SK-N-SH (cell line): ENCODE measurements at regions of chr19 and their contacts with region 1.

Region 1: DNA sequence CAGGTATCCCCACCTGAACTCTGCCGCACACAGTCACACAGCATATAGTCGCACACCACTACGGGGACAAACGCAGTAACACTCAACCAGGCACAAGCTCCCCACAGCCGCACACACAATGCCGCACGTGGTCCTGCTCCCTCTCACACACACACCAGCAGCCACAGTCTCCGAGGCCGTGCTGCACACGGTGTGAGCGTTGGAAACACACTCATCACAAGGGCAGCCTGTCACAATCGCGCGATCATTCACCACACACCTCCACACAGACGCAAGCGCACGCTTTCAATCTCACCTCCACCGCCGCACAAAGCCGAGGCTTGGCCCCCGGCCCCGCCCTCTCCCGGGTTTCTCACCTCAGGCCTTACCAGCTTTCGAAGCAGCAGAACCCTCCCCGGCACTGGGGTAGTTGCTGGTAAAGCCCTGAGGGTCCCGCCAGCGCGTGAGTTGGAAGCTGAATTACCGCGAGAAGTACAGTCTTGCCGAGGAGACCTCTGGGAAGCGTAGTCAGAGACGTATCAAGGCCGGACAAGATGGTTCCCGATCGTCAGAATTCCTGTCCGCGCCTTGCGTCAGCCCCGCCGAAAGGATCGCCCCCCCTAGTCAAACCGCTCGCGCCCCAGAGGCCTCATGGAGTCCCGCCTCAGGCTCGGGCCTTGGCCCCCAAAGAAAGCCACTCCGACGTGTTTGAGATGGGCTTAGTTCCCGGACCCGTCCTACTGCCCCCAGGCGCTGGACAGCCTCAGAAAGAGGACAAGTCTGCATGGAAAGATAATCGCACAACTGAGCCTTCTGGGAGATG is at the start of gene ZNF566:
- DNase-seq: peak; percentile 94
- H3K4me3 ChIP-seq: peak within 1 kb of the TSS; percentile 62 to 83
- H3K27ac ChIP-seq: peak within 1 kb of the TSS; percentile 83 to 96
- H3K4me1 ChIP-seq: no peaks in the 10 kb centered on the region; a peak in 2 of 4 replicates
- H3K27me3 ChIP-seq: no peaks in the 10 kb centered on the region
- CTCF ChIP-seq: peak; percentile 32
- EP300 ChIP-seq: no peak
- RAD21 ChIP-seq: no peak
- polyA plus RNA-seq, gene ZNF566: 1.7 and 3.4 TPM in 2 replicates

Region 2: GRCh38 chr19:36418287-36419001 is 70.9 kb before region 1 on chr19 and contains the start of gene ZFP82:
- CTCF ChIA-PET with region 1: interaction called, 6 read pairs
- POLR2A ChIA-PET with region 1: interaction called, 10 read pairs
- DNase-seq: peak; percentile 98
- H3K4me3 ChIP-seq: peak within 1 kb of the TSS; percentile 66 to 72
- H3K27ac ChIP-seq: peak within 1 kb of the TSS; percentile 64 to 88
- H3K4me1 ChIP-seq: peaks cover 0 to 6% of the 10 kb centered on the region in 2 experiments; a peak in 2 of 4 replicates
- H3K27me3 ChIP-seq: no peaks in the 10 kb centered on the region
- CTCF ChIP-seq: no peak
- EP300 ChIP-seq: no peak
- RAD21 ChIP-seq: no peak
- polyA plus RNA-seq, gene ZFP82: 2.1 and 2.8 TPM in 2 replicates

Region 3: GRCh38 chr19:36501973-36502372 is 12.7 kb after region 1 on chr19:
- CTCF ChIA-PET with region 1: no interaction called
- POLR2A ChIA-PET with region 1: no interaction called
- DNase-seq: no peak
- H3K4me3 ChIP-seq: no peak overlapping the region
- H3K27ac ChIP-seq: no peak overlapping the region
- H3K4me1 ChIP-seq: no peaks in the 10 kb centered on the region
- H3K27me3 ChIP-seq: no peaks in the 10 kb centered on the region
- CTCF ChIP-seq: no peak
- EP300 ChIP-seq: no peak
- RAD21 ChIP-seq: no peak

Region 4: GRCh38 chr19:36528194-36528920 is 39.0 kb after region 1 on chr19 and contains the start of gene ZNF260:
- CTCF ChIA-PET with region 1: no interaction called
- POLR2A ChIA-PET with region 1: interaction called, 21 read pairs
- DNase-seq: peak; percentile 92
- H3K4me3 ChIP-seq: peak within 1 kb of the TSS; percentile 73 to 74
- H3K27ac ChIP-seq: peak within 1 kb of the TSS; percentile 86 to 96
- H3K4me1 ChIP-seq: no peaks in the 10 kb centered on the region; a peak in 2 of 4 replicates
- H3K27me3 ChIP-seq: no peaks in the 10 kb centered on the region
- CTCF ChIP-seq: no peak
- EP300 ChIP-seq: no peak
- RAD21 ChIP-seq: 0 out of 2 replicates have a peak, but pooled peaks have one; percentile 13
- polyA plus RNA-seq, gene ZNF260: 2.6 and 4.7 TPM in 2 replicates

Region 5: DNA sequence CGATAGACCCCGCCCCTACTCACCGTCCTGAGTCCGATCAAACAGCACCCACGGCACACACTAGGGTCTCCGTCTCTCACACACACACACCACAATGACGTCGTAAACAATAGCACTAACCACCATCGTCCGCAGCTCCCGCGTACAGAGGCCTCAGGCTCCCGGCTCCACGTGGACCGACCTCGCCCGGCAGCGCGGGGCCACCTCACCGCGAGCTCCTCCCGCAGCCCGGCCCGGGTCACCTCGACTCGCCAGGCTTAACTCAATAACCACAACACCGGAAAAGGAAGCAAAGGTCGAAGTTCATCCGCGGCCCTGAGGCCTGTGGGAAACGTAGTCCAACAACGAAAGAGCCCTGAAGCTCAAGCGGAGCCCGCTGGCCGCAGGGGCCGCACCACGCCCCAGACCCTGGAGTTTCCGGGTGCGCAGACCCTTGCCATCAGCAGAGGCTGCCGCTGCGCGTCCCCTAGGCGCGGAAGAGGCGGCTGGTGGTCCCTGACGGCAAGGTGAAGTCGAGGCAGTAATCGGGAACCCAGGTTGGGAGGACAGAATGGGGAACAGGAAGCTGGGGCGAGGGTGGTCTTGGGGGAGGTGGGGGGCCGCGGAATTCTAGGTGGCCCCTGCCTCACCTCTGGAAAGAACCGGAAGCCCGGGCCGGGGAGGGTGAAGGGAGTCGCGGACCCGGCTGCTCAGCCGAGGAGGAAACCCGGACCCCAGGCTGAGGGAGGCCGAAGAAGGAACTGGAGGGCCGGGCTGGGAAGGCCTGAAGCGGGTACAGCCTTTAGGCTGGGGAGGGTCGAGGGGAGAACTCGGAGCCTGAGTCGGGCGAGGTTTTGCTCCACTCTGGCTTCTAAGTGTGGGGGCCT is 83.9 kb after region 1 on chr19 and contains the start of gene ZNF529:
- CTCF ChIA-PET with region 1: no interaction called
- POLR2A ChIA-PET with region 1: interaction called, 10 read pairs
- DNase-seq: peak; percentile 94
- H3K4me3 ChIP-seq: peak within 1 kb of the TSS; percentile 81 to 99
- H3K27ac ChIP-seq: peak within 1 kb of the TSS; percentile 71 to 79
- H3K4me1 ChIP-seq: peaks cover 0 to 6% of the 10 kb centered on the region in 2 experiments; a peak in 3 of 4 replicates
- H3K27me3 ChIP-seq: no peaks in the 10 kb centered on the region
- CTCF ChIP-seq: no peak
- EP300 ChIP-seq: no peak
- RAD21 ChIP-seq: no peak; the same call in 1 of the 2 replicates
- polyA plus RNA-seq, gene ZNF529: 5.6 and 8.6 TPM in 2 replicates